MCF 10A (cell line): ENCODE measurements at regions of chr11 and their contacts with region 1.

Region 1: DNA sequence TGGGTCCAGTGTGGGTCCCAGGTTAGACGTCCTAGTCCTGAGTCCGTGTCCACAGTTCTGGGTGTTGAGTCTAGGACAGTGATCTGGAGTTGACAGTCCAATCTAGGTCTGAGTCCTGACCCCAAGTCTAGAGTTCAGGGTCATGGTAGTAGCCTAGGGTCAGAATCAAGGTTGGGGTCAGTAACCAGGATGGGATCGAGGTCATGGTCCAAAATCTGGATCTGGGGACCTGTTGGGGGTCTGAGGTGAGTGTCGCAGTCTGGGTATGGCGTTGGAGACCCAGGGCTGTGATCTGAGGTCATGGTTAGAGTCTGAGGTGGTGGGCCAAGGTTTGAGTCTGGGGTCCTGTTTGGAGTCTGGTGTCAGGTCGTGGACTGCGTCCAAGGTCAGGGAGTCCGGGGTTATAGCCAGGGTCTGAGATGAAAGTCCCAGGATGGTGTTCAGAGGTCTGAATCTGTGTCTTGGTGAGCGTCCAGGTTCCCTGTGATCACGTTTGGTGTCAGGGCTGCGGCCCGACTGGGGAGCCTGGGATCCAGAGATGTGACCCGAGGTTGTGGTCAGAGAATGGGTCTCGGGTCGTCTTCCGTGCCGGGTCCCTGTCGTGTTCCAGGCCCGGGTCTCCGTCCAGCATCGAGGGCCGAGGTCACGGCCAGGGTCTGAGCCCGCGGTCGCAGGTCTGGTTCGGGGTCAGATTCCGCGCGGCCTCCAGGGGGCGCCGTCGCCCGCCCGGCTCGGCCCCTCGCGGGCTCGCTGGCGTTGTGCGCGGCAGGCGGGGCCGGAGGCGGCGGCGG is 445 bp upstream of the GRK2 start:
- DNase-seq: peak; percentile 57
- H3K4me3 Mint-ChIP-seq: peak overlapping the region; percentile 93
- H3K27ac Mint-ChIP-seq: peak overlapping the region; percentile 89
- H3K4me1 Mint-ChIP-seq: peaks cover 33% of the 10 kb centered on the region
- H3K27me3 Mint-ChIP-seq: no peaks in the 10 kb centered on the region
- CTCF ChIP-seq: peak; percentile 57

Region 2: GRCh38 chr11:66883016-66883968 is 382.5 kb before region 1 on chr11:
- CTCF ChIA-PET with region 1: no interaction called
- POLR2A ChIA-PET with region 1: no interaction called
- intact Hi-C with region 1: no loop called
- DNase-seq: peak; percentile 56
- H3K4me3 Mint-ChIP-seq: no peak overlapping the region
- H3K27ac Mint-ChIP-seq: no peak overlapping the region
- H3K4me1 Mint-ChIP-seq: peaks cover 54% of the 10 kb centered on the region
- H3K27me3 Mint-ChIP-seq: no peaks in the 10 kb centered on the region
- CTCF ChIP-seq: peak; percentile 7

Region 3: DNA sequence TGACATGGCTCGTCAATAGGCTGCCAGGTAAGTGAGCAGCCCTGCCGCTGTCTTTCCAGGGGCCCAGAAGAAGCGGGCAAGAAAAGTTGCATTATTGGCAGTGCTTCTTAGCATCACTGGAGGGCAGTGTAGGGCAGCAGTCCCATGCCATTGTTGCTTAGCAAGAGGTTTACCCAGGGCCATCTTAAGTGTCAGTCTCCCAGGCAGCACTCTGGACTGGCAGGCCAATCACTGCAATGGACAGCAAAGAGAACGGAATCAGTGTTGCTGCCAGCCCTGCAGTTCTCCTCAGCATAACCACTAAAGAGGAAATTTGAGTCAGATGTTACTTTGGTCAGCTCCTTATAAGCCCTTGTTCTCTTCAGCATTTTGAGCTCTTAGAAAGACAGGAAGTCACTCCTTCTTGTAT is 13.0 kb before region 1 on chr11:
- CTCF ChIA-PET with region 1: interaction called, 43 read pairs
- POLR2A ChIA-PET with region 1: interaction called, 7 read pairs
- intact Hi-C with region 1: no loop called
- DNase-seq: peak; percentile 46
- H3K4me3 Mint-ChIP-seq: no peak overlapping the region
- H3K27ac Mint-ChIP-seq: peak overlapping the region; percentile 37
- H3K4me1 Mint-ChIP-seq: peaks cover 15% of the 10 kb centered on the region
- H3K27me3 Mint-ChIP-seq: no peaks in the 10 kb centered on the region
- CTCF ChIP-seq: peak; percentile 18

Region 4: DNA sequence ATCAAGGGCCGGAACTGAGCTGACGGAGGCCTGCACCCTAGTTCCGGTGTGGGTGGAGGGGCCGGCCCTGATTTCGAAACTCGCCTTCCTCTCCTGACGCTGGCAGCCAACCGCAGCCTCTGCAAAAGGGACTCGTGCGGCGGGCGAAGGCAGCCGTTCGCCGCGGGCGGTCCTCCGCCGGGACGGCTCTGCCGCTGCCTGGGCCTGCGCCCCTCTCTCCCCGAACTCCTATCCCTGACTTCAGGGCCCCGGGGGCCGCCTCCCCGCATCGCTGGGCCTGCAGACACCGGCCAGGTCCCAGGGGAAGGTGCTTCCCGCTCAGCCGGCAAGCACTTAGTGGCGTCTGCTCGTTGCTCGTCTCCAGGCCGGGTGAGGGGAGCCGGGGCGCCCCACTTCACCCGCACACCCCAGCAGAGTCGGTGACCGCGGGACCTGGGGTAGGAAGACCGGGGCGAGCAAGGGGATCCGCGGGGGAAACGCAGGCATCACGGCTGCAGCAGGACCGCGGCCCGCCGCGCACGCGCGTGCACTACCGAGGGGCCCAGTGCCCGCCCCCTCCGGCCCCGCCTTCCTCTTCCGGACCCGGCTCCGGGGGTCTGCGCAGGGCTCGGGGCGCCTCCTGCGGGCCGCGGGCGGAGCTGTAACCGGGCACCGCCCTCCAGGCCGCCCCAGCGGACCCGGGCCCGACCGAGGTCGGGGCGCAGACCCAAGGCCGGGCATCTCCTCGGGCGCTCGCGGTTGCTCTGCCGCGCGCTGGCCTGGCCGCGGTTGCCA is 22.8 kb after region 1 on chr11:
- CTCF ChIA-PET with region 1: interaction called, 9 read pairs
- POLR2A ChIA-PET with region 1: interaction called, 21 read pairs
- intact Hi-C with region 1: no loop called
- DNase-seq: peak; percentile 92
- H3K4me3 Mint-ChIP-seq: peak overlapping the region; percentile 92
- H3K27ac Mint-ChIP-seq: peak overlapping the region; percentile 96
- H3K4me1 Mint-ChIP-seq: peaks cover 23% of the 10 kb centered on the region
- H3K27me3 Mint-ChIP-seq: no peaks in the 10 kb centered on the region
- CTCF ChIP-seq: peak; percentile 11

Region 5: DNA sequence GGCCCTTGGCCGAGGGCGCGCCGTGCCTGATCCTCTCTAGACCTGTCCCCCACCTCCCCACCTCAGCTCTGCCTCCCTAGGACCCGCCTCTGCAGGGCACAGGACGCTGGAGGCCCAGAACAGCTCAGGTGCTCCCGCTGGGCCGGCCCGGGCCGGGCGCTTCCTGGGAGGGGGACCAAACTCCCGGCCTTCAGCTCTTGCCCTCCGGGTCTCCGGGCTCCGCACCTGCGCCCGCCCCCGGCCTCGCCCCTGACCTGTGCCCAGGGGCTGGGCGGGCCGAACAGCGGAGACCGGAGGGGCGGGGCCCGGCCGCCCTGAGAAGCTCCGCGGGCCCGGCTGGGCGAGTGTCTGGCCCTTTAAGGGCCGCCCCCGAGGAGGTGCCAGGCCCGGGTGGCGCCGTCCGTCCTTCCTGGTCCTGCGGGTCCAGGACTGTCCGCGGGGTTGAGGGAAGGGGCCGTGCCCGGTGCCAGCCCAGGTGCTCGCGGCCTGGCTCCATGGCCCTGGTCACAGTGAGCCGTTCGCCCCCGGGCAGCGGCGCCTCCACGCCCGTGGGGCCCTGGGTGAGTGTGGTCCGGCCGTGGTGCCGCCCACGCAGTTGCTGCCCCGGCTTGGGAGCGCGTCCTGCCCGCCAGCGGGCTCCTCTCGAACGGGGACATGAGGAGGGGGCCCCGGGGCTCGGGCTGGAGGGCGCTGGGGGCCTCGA is 37.5 kb after region 1 on chr11 and contains the start of gene SSH3:
- CTCF ChIA-PET with region 1: interaction called, 7 read pairs
- POLR2A ChIA-PET with region 1: interaction called, 17 read pairs
- intact Hi-C with region 1: no loop called
- DNase-seq: peak; percentile 81
- H3K4me3 Mint-ChIP-seq: peak within 1 kb of the TSS; percentile 70
- H3K27ac Mint-ChIP-seq: peak within 1 kb of the TSS; percentile 23
- H3K4me1 Mint-ChIP-seq: peaks cover 11% of the 10 kb centered on the region
- H3K27me3 Mint-ChIP-seq: no peaks in the 10 kb centered on the region
- CTCF ChIP-seq: no peak
- total RNA-seq, gene SSH3: 31.7 and 38.0 TPM in 2 replicates

Region 6: GRCh38 chr11:67382276-67383136 is 116.7 kb after region 1 on chr11:
- CTCF ChIA-PET with region 1: interaction called, 37 read pairs
- POLR2A ChIA-PET with region 1: interaction called, 3 read pairs
- intact Hi-C with region 1: loop called (anchors 1 kb)
- DNase-seq: peak; percentile 83
- H3K4me3 Mint-ChIP-seq: no peak overlapping the region
- H3K27ac Mint-ChIP-seq: peak overlapping the region; percentile 6
- H3K4me1 Mint-ChIP-seq: peaks cover 41% of the 10 kb centered on the region
- H3K27me3 Mint-ChIP-seq: no peaks in the 10 kb centered on the region
- CTCF ChIP-seq: peak; percentile 97